Activated CD8-positive, alpha-beta T cell treated with anti-CD3 and anti-CD28 coated beads, Interleukin-2, amount 10 ng/mL, durations not matched to agents 7 days and 5 days (primary cell): ENCODE measurements at regions of chr9 and their contacts with region 1.

Region 1: DNA sequence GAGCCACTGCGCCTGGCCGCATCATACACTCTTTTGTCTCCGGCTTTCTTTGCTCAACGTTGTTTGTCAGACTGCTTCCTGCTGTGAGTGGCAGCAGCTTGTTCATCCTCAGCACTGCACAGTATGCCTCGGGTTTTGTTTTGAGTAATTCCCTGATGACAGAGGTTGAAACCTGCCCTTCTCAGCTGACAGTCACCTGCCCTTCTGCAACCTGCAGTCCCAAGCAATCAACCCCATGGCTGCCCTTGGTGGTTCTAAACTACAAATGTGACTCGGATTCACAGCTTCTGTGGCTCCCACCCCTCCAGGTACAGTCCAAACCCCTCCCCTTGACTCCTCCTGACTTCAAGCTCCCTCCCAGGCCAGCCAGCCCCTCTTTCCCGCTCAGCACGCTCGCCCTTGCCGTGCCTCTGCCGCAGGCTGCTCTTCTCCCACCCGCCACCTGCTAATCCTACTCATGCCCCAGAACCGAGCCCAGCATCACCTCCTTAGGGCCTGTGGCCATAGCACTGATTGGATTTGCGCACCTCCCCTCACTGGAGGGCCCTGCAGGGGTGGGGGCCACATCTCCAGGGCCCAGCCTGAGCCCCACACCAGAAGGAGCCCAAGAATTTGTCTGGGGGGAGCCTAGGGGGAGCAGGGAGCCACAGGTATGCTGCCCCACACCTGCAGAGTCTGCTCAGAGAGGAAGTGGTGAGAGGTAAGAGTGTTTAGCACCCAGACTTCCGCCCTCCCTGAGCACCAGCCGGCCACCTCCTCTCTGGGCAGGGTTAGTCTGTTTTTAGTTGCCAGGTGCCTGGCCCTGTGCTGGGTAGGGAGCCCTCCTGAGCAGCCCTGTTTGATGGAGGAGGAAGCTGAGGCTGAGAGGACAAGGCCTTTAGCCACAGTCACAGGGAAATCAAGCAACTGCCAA is 10.1 kb downstream of the EEIG1 start:
- DNase-seq: peak; percentile 86
- ATAC-seq: peak; percentile 74
- H3K4me3 Mint-ChIP-seq: peak overlapping the region; percentile 97
- H3K27ac Mint-ChIP-seq: peak overlapping the region; percentile 99
- H3K4me1 Mint-ChIP-seq: peaks cover 98% of the 10 kb centered on the region
- H3K27me3 Mint-ChIP-seq: no peaks in the 10 kb centered on the region

Region 2: DNA sequence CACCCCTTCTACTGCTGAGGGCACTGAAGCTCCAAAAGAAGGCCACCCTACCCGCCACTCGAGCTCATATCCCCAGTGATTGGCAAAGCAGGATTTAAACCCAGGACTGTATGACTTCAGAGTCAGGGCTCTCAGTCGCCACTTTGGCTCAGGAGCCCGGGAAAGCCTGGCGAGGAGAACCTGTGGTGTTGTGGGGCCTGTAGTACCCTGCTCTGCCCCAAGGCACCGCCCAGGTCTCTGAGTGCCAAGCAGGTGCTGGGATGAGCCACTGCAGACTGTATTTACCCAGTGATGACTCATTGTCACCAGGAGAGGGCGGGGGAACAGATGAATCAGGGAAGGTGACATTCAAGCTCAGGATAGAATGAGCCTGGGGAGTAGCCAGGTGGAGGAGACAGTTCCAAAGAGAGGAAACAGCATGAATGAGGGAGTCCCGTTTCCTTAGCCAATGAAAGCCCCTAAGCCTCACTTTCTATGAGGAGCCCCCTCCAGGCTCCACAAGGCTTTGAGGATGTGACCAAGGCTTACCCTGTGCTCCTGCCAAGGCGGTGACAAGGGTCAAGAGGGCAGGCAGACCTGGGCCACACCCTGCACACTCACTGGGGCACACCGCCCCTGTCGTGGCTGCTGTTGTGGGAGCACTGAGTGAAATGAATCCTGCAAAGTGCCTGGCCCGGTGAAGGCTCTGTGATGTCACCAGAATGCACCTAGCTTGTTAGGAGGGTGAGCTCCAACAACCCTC is 15.2 kb before region 1 on chr9:
- CTCF ChIA-PET with region 1: interaction called, 75 read pairs
- POLR2A ChIA-PET with region 1: interaction called, 6 read pairs
- DNase-seq: peak; percentile 83
- ATAC-seq: peak; percentile 96
- H3K4me3 Mint-ChIP-seq: peak overlapping the region; percentile 21
- H3K27ac Mint-ChIP-seq: peak overlapping the region; percentile 70
- H3K4me1 Mint-ChIP-seq: peaks cover 89% of the 10 kb centered on the region
- H3K27me3 Mint-ChIP-seq: no peaks in the 10 kb centered on the region